CD4-positive, alpha-beta T cell (primary cell): ENCODE measurements at regions of chr1 and their contacts with region 1.

Region 1: GRCh38 chr1:25971066-25971810 is 26.6 kb downstream of the PAFAH2 start:
- DNase-seq: peak in 7 of 14 experiments; percentile 8 to 64 (median 51)
- ATAC-seq: peak; percentile 84
- H3K4me3 ChIP-seq: no peak overlapping the region
- H3K4me3 Mint-ChIP-seq: peak overlapping the region; percentile 28
- H3K27ac ChIP-seq: peak overlapping the region; percentile 5 to 23
- H3K27ac Mint-ChIP-seq: peak overlapping the region; percentile 79
- H3K4me1 ChIP-seq: peaks cover 22% of the 10 kb centered on the region
- H3K4me1 Mint-ChIP-seq: peaks cover 63% of the 10 kb centered on the region
- H3K27me3 ChIP-seq: no peaks in the 10 kb centered on the region
- H3K27me3 Mint-ChIP-seq: no peaks in the 10 kb centered on the region
- CTCF ChIP-seq: no peak

Region 2: GRCh38 chr1:25922056-25922969 is 48.9 kb before region 1 on chr1:
- CTCF ChIA-PET with region 1: no interaction called
- POLR2A ChIA-PET with region 1: interaction called, 16 read pairs
- intact Hi-C with region 1: loop called in 1 of 2 experiments (anchors 5 kb)
- DNase-seq: peak in 13 of 14 experiments; percentile 13 to 76 (median 37)
- ATAC-seq: peak; percentile 77
- H3K4me3 ChIP-seq: peak overlapping the region; percentile 67
- H3K4me3 Mint-ChIP-seq: peak overlapping the region; percentile 88
- H3K27ac ChIP-seq: no peak overlapping the region
- H3K27ac Mint-ChIP-seq: peak overlapping the region; percentile 84
- H3K4me1 ChIP-seq: peaks cover 32% of the 10 kb centered on the region
- H3K4me1 Mint-ChIP-seq: peaks cover 41% of the 10 kb centered on the region
- H3K27me3 ChIP-seq: no peaks in the 10 kb centered on the region
- H3K27me3 Mint-ChIP-seq: no peaks in the 10 kb centered on the region
- CTCF ChIP-seq: no peak

Region 3: DNA sequence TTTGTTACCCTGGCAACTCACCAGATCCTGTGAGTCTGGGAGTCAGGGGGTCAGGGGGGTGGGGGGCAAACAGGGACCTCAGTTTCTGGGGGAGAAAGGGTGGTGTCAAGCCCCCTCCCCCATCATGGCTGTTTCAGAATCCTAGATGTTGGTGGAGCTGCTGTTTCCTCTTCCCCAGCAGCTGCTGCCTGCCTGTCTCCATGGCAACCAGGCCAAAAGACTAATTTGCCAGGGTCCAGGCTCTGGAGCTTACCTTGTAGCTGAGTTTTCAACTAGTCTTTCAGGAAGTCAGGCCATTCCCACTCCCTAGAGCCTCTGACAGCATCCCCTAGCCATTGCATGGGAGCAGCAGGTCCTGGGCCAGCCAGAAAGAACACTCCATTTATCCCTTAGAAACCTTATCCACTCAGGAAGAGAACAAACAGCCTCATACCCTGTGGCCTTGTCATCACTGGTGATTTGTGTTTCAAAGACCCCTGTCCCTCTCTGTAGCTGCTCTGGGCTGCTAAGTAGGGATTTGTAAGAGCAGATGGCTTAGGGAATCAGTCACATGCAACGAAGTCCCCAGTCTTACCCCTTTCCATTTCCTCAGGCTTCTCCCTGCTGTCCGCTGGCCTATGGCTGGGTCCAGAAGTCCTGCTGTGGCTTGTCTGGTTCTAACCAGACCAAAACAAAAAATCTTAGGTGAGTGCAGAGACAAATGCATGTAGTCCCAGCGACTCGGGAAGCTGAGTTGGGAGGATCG is 43.5 kb before region 1 on chr1:
- CTCF ChIA-PET with region 1: no interaction called
- POLR2A ChIA-PET with region 1: interaction called, 16 read pairs
- intact Hi-C with region 1: loop called in 1 of 2 experiments (anchors 5 kb)
- DNase-seq: no peak
- ATAC-seq: no peak
- H3K4me3 ChIP-seq: no peak overlapping the region
- H3K4me3 Mint-ChIP-seq: no peak overlapping the region
- H3K27ac ChIP-seq: no peak overlapping the region
- H3K27ac Mint-ChIP-seq: no peak overlapping the region
- H3K4me1 ChIP-seq: peaks cover 10% of the 10 kb centered on the region
- H3K4me1 Mint-ChIP-seq: peaks cover 10% of the 10 kb centered on the region
- H3K27me3 ChIP-seq: no peaks in the 10 kb centered on the region
- H3K27me3 Mint-ChIP-seq: no peaks in the 10 kb centered on the region
- CTCF ChIP-seq: no peak

Region 4: DNA sequence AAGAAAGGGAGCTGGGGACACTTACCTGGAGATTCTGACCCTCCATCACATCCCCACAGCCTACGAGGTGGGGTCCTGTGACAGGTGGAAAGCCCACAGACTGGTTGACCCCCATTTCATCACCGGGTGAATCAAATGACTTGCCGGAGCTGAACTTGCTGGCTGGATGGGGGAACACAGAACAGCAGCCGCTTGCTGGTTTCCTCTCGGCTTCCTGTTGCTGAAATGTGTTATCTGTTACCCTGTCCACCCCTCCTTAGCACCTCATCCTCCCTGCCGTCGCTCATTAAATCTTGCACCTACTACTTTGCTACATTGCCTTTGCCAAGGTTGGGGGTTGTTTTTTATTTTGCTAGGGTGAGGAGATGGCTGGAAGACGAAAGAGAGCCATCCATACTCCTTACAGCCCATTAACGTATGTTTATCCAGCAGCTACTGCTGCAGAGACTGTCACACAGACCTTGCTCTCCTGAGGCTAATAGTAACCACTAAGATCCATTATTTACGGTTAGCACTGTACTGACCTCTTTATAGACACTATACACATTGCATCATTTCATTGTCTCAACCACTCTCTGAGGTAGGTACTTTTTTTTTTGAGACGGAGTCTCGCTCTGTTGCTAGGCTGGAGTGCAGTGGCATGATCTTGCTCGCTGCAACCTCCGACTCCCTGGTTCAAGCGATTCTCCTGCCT is 19.6 kb after region 1 on chr1:
- CTCF ChIA-PET with region 1: no interaction called
- POLR2A ChIA-PET with region 1: interaction called, 33 read pairs
- intact Hi-C with region 1: no loop called
- DNase-seq: peak; percentile 12 to 74 (median 44)
- ATAC-seq: peak; percentile 91
- H3K4me3 ChIP-seq: peak overlapping the region; percentile 64
- H3K4me3 Mint-ChIP-seq: peak overlapping the region; percentile 90
- H3K27ac ChIP-seq: peak overlapping the region; percentile 56 to 67
- H3K27ac Mint-ChIP-seq: peak overlapping the region; percentile 81
- H3K4me1 ChIP-seq: peaks cover 36% of the 10 kb centered on the region
- H3K4me1 Mint-ChIP-seq: peaks cover 80% of the 10 kb centered on the region
- H3K27me3 ChIP-seq: no peaks in the 10 kb centered on the region
- H3K27me3 Mint-ChIP-seq: no peaks in the 10 kb centered on the region
- CTCF ChIP-seq: no peak

Region 5: DNA sequence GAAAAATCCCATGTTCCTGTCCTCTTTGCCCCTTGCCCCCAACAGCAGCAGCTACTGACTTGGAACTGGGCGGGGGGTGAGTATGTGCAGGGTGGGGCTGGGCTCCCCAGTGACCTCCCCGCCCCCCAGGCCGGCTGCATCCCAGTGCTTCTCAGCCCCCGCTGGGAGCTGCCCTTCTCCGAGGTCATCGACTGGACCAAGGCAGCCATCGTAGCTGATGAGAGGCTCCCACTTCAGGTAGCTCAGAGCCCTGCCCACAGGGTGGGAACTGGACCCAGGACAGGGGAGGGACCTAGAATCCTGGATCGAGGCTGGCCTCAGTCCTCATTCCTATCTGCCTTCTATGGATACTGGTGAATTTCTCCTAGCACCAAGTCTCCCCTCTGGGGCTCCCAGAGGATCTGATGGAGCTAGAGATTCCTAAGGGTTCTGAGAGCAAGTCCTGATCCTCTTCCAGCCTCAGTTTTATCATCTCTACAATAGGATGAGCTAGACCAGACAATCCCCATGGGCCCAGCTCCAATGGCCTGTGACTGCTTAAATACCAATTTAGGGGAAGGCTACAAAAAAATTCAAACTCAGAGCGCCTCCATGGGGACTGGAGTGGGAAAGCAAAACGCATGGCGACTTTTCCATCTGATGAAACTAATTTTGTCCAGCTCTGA is 58.4 kb after region 1 on chr1:
- CTCF ChIA-PET with region 1: no interaction called
- POLR2A ChIA-PET with region 1: no interaction called
- intact Hi-C with region 1: no loop called
- DNase-seq: no peak
- ATAC-seq: no peak
- H3K4me3 ChIP-seq: no peak overlapping the region
- H3K4me3 Mint-ChIP-seq: no peak overlapping the region
- H3K27ac ChIP-seq: no peak overlapping the region
- H3K27ac Mint-ChIP-seq: no peak overlapping the region
- H3K4me1 ChIP-seq: peaks cover 3% of the 10 kb centered on the region
- H3K4me1 Mint-ChIP-seq: peaks cover 3% of the 10 kb centered on the region
- H3K27me3 ChIP-seq: peaks cover 0 to 2% of the 10 kb centered on the region in 2 experiments
- H3K27me3 Mint-ChIP-seq: no peaks in the 10 kb centered on the region
- CTCF ChIP-seq: no peak

Region 6: DNA sequence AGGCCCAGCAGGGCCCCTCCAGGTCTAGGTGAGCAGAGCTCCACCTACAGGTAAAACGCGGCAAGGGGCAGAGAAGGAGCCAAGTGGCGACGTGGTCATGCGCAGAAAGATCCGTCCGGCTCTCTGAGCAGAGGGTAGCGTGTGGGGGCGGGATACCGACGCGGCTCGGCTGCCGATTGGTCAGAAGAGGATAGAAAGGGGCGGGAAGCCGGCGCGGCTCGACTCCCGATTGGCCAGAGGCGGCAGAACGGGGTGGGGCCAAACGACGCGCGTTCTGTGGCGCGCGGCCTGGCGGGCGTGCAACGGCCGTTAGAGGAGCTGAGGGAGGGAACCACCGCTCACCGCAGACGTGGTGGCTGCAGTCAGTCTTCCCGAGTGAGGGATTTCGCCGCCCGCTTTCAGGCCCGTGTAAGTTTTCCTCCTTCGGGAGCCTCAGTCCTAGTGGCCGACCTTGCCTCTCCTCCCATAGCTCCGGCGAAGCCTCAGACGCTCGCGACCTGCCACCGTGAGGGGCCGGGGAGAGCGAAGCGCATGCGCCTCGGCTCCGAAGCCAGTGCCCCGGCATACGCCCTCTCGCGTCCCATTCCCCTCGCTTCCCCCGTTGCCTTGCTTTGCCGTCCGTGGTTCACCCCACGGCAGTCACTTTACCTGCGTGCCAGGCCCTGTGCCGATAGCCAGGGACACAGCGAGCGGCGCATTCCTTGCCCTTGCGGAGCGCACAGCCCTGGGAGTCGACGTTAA is 262.8 kb after region 1 on chr1 and contains the start of gene CEP85:
- CTCF ChIA-PET with region 1: no interaction called
- POLR2A ChIA-PET with region 1: no interaction called
- intact Hi-C with region 1: no loop called
- DNase-seq: peak; percentile 97 to 100 (median 99)
- ATAC-seq: peak; percentile 89
- H3K4me3 ChIP-seq: peak within 1 kb of the TSS; percentile 77
- H3K4me3 Mint-ChIP-seq: peak within 1 kb of the TSS; percentile 98
- H3K27ac ChIP-seq: peak within 1 kb of the TSS; percentile 83 to 88
- H3K27ac Mint-ChIP-seq: peak within 1 kb of the TSS; percentile 95
- H3K4me1 ChIP-seq: peaks cover 21% of the 10 kb centered on the region
- H3K4me1 Mint-ChIP-seq: peaks cover 39% of the 10 kb centered on the region
- H3K27me3 ChIP-seq: no peaks in the 10 kb centered on the region
- H3K27me3 Mint-ChIP-seq: no peaks in the 10 kb centered on the region
- CTCF ChIP-seq: peak; percentile 85
- total RNA-seq, gene CEP85: 7.6 to 8.4 TPM